ENCODE measurements at regions of chr12 and their contacts with region 1.

Region 1: DNA sequence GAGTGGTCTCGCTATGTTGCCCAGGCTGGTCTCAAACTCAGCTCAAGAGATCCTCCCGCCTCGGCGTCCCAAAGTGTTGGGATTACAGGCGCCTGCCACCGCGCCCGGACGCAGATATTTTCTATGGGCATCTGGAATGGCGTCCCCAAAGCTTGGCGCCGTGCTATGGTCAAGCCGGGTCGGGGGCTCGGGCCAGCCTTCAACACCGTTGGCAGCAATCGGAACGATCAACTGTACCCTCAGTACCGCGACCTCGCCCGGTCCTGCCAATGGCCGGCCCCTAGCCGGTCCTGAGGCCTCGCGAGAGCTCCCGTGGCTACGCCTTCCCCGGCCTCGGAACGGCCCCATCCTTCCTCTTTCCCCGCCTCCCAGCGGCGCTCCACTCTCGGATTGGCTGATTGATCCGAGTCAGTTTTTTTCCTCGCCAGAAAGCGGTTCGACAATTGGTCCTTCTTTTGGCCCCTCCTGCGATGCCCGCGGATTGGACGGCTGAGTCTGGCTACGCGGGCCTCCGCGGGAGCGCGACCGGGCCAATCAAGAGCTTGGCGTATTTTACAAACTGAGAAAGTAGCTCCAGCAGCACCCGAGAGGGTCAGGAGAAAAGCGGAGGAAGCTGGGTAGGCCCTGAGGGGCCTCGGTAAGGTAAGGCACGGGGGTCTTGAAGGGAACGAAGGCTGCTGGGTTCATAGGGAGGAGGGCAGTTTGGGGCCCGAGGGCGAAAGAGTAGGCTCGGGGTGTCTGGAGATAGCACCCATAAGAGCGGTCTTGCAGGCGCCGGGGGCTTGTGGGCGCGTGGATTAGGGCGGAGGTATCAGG is at the start of gene TROAP:
- DNase-seq: peak; percentile 98
- H3K4me3 Mint-ChIP-seq: peak within 1 kb of the TSS; percentile 98
- H3K27ac Mint-ChIP-seq: peak within 1 kb of the TSS; percentile 94
- H3K4me1 Mint-ChIP-seq: peaks cover 42% of the 10 kb centered on the region
- H3K27me3 Mint-ChIP-seq: peaks cover 7% of the 10 kb centered on the region

Region 2: DNA sequence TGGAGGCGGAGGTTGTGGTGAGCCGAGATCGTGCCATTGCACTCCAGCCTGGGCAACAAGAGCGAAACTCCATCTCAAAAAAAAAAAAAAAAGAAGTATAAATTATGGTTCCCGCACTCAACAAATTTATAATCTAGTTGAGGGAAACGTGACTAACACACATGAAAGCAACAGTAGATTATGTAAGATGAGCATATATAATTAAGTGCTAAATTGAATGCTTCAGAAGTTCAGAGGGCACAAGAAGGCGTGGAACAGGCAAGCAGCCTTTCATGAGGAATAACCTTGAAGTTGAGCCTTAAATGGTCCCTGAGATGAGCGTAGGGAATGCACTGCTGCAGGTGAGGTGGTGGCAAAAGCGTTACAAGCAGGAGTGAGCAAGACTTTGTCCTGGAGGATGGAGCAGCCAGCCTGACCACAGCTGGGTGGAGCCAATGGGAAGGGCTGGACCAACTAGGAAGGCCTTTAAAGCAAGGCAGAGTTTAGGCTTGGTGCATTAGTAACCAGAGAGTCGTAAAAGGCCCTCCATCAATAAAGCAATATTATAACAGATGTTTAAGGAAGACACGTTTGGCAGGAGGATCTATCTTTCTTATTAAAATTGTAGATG is 103.4 kb before region 1 on chr12:
- CTCF ChIA-PET with region 1: no interaction called
- DNase-seq: no peak
- H3K4me3 Mint-ChIP-seq: no peak overlapping the region
- H3K27ac Mint-ChIP-seq: no peak overlapping the region
- H3K4me1 Mint-ChIP-seq: no peaks in the 10 kb centered on the region
- H3K27me3 Mint-ChIP-seq: peaks cover 15% of the 10 kb centered on the region

Region 3: GRCh38 chr12:49296034-49296835 is 26.7 kb before region 1 on chr12:
- CTCF ChIA-PET with region 1: interaction called, 18 read pairs
- DNase-seq: peak; percentile 76
- H3K4me3 Mint-ChIP-seq: peak overlapping the region; percentile 37
- H3K27ac Mint-ChIP-seq: no peak overlapping the region
- H3K4me1 Mint-ChIP-seq: peaks cover 25% of the 10 kb centered on the region
- H3K27me3 Mint-ChIP-seq: peaks cover 96% of the 10 kb centered on the region

Measured in activated naive CD4-positive, alpha-beta T cell treated with anti-CD3 and anti-CD28 coated beads, Interleukin-2, amount 10 ng/mL, durations not matched to agents 7 days and 5 days (primary cell).